ENCODE measurements at regions of chr22 and their contacts with region 1.

Region 1: GRCh38 chr22:39306581-39307361 is 12.7 kb downstream of the RPL3 start:
- DNase-seq: no peak
- H3K4me3 ChIP-seq: no peak overlapping the region
- H3K27ac ChIP-seq: no peak overlapping the region
- H3K4me1 ChIP-seq: peaks cover 36% of the 10 kb centered on the region
- H3K27me3 ChIP-seq: no peaks in the 10 kb centered on the region
- CTCF ChIP-seq: peak; percentile 39 to 54

Region 2: DNA sequence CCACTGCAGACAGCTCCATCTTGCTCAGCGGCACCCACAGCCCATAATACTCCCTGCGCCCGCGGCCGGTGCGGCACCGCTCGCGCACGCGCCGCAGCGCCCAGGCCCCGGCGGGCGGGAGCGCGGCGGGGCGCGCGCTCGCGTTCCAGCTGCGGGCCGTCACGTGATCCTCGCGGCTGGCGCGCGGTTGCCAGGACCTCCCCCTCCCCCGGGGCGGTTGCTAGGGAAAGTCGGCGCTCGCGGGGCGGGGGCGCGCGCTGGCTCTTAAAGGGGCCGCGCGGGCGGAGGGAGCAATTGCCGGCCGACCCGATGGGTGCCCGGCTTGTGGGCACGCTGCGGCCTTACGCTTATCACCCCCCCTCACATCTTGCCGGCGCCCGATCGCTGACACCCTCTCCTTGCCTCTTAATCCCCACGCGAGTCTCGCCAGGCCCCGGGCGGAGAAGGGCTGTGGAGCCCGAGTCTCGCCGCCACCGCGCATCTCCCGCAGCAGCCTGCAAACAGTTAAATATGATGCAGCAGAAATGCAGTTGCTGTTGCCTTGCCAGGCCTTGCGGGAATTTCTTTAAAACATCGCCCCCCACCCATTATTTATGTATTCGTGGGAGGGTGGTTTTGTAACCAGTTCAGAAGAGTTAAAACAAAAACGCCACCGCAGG is 434.5 kb before region 1 on chr22 and contains the start of gene CBX6:
- CTCF ChIA-PET with region 1: no interaction called
- dilution Hi-C with region 1: no loop called
- in situ Hi-C with region 1: loop called in 1 of 2 experiments (anchors 25 kb)
- intact Hi-C with region 1: loop called (anchors 5 kb)
- DNase-seq: peak; percentile 81
- H3K4me3 ChIP-seq: peak within 1 kb of the TSS; percentile 68 to 83 (median 76)
- H3K27ac ChIP-seq: peak within 1 kb of the TSS; percentile 36
- H3K4me1 ChIP-seq: peaks cover 27% of the 10 kb centered on the region
- H3K27me3 ChIP-seq: no peaks in the 10 kb centered on the region
- CTCF ChIP-seq: no peak
- total RNA-seq, gene CBX6: 32.3 to 55.7 TPM

Region 3: GRCh38 chr22:39135090-39135896 is 171.5 kb before region 1 on chr22:
- CTCF ChIA-PET with region 1: interaction called, 6 read pairs
- dilution Hi-C with region 1: no loop called
- in situ Hi-C with region 1: no loop called
- intact Hi-C with region 1: loop called (anchors 1 kb)
- DNase-seq: peak; percentile 39
- H3K4me3 ChIP-seq: no peak overlapping the region
- H3K27ac ChIP-seq: no peak overlapping the region
- H3K4me1 ChIP-seq: peaks cover 10% of the 10 kb centered on the region
- H3K27me3 ChIP-seq: no peaks in the 10 kb centered on the region
- CTCF ChIP-seq: peak; percentile 55 to 62

Region 4: GRCh38 chr22:39244496-39245129 is 62.2 kb before region 1 on chr22 and contains the start of gene PDGFB:
- CTCF ChIA-PET with region 1: no interaction called
- dilution Hi-C with region 1: no loop called
- in situ Hi-C with region 1: loop called in 1 of 2 experiments (anchors 5 kb)
- intact Hi-C with region 1: loop called (anchors 2 kb)
- DNase-seq: peak; percentile 44
- H3K4me3 ChIP-seq: peak within 1 kb of the TSS; percentile 64 to 74 (median 70)
- H3K27ac ChIP-seq: no peak within 1 kb of the TSS
- H3K4me1 ChIP-seq: peaks cover 30% of the 10 kb centered on the region
- H3K27me3 ChIP-seq: no peaks in the 10 kb centered on the region
- CTCF ChIP-seq: no peak
- total RNA-seq, gene PDGFB: 11.2 to 29.2 TPM

Region 5: DNA sequence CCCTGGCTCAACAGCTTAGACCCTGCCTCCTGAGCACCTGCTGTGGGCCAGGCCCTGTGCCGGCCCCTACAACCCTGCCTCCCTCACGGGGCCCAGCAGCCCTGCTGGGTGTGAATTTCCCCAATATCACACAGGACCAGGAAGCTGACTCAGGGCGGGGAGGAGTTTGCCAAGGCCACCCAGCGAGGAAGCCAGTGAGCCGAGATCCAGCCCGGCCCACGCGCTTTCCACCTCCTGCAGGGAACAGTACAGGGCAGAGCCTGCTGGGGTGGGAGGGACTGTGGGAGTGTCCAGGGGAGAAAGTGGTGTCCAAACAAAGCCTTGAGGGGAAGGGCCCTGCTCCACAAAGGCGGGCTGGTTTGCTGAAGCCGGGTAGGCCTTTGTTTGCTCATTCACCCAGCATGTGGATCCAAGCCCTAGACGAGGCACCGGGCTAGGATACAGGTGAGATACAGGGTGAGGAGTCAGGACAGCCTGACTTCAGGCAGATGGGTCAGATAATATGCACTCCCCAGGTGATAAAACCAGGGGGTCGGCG is 14.1 kb before region 1 on chr22:
- CTCF ChIA-PET with region 1: interaction called, 3 read pairs
- dilution Hi-C with region 1: no loop called
- in situ Hi-C with region 1: no loop called
- intact Hi-C with region 1: loop called (anchors 1 kb)
- DNase-seq: peak; percentile 96
- H3K4me3 ChIP-seq: no peak overlapping the region
- H3K27ac ChIP-seq: peak overlapping the region; percentile 54
- H3K4me1 ChIP-seq: peaks cover 50% of the 10 kb centered on the region
- H3K27me3 ChIP-seq: no peaks in the 10 kb centered on the region
- CTCF ChIP-seq: no peak

Region 6: DNA sequence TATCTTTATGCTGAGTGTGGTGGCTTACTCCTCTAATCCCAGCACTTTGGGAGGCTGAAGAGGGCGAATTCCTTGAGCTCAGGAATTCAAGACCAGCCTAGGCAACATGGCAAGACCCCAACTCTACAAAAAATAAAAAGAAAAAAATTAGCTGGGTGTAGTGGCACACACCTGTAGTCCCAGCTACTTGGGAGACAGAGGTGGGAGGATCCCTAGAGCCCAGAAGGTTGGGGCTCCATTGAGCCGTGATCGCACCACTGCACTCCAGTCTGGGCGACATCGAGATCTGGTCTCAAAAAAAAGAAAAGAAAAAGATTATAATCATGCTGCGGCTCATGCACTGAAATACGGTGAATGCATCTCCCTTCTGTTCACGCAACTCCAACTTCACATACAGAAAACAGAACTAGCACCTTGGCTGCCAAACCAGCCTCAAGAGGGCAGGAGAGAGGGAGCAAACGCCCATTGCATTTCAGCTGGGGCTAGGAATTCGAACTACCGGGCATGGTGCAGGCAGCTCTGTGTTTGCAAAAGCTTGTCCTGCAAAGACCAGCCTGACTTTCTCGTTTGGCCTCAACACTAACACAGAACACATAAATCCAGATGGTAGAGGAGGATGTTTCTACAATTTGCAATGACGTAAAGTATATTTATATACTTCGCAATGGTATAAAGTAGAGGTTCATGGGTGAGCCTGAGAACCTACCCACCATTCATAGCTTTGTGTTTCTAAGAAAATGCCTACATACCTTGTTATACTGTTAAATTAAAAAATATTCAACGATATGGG is 36.7 kb after region 1 on chr22:
- CTCF ChIA-PET with region 1: no interaction called
- dilution Hi-C with region 1: no loop called
- in situ Hi-C with region 1: no loop called
- intact Hi-C with region 1: no loop called
- DNase-seq: peak; percentile 42
- H3K4me3 ChIP-seq: no peak overlapping the region
- H3K27ac ChIP-seq: no peak overlapping the region
- H3K4me1 ChIP-seq: no peaks in the 10 kb centered on the region
- H3K27me3 ChIP-seq: no peaks in the 10 kb centered on the region
- CTCF ChIP-seq: peak; percentile 86 to 87

Measured in mammary epithelial cell (primary cell).